Activated T-helper 2 cell treated with anti-CD3 and anti-CD28 coated beads, Interferon-gamma antibody, Interleukin-2, Interleukin-4, amounts not matched to agents 10 μg/mL and 5 μg/mL and 100 μg/mL, durations not matched to agents 14 hours and 24 hours and 36 hours (primary cell): ENCODE measurements at regions of chr3 and their contacts with region 1.

Region 1: GRCh38 chr3:33063651-33064051 is 33.3 kb downstream of the GLB1 start:
- DNase-seq: peak; percentile 60
- H3K4me3 Mint-ChIP-seq: peak overlapping the region; percentile 9
- H3K27ac Mint-ChIP-seq: peak overlapping the region; percentile 83
- H3K4me1 Mint-ChIP-seq: peaks cover 67% of the 10 kb centered on the region
- H3K27me3 Mint-ChIP-seq: no peaks in the 10 kb centered on the region

Region 2: DNA sequence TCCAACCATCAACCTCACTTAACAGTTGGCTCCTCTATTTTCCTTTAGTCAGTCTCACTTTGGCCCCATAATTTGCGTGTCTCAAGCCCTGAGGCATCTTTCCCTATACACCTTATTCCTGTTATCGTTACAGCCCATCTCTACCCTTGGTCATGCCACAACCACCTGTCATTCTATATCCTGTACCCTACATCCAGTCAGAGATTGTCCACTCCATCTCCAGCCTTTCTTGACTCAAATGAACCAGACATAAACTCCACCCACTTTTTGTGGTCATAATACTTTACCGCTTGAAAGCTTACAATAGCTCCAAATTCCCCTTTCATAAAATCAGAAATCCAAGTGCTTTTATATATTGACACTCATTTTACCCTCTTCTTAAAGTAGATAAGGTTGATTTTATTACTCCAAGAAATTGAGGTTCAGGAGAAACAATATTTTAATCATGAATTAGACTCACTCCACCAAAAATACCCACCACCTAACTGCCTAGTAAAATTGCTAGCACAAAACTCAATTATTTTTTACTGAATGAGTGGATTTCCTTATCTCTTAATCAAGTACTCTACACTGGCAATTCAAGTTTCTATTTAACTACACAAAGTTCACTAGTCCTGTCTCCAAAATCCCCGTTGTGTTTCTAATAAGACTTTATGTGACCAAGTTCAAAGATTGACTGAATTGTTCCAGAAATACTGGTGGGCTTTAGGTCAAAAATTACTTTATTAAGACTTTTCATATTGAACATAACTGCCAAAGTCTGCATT is 103.1 kb before region 1 on chr3:
- intact Hi-C with region 1: loop called (anchors 1 kb)
- DNase-seq: no peak
- H3K4me3 Mint-ChIP-seq: peak overlapping the region; percentile 73
- H3K27ac Mint-ChIP-seq: peak overlapping the region; percentile 99
- H3K4me1 Mint-ChIP-seq: peaks cover 62% of the 10 kb centered on the region
- H3K27me3 Mint-ChIP-seq: no peaks in the 10 kb centered on the region

Region 3: GRCh38 chr3:33006081-33006480 is 57.6 kb before region 1 on chr3:
- intact Hi-C with region 1: loop called (anchors 2 kb)
- DNase-seq: no peak
- H3K4me3 Mint-ChIP-seq: no peak overlapping the region
- H3K27ac Mint-ChIP-seq: peak overlapping the region; percentile 84
- H3K4me1 Mint-ChIP-seq: peaks cover 59% of the 10 kb centered on the region
- H3K27me3 Mint-ChIP-seq: no peaks in the 10 kb centered on the region

Region 4: DNA sequence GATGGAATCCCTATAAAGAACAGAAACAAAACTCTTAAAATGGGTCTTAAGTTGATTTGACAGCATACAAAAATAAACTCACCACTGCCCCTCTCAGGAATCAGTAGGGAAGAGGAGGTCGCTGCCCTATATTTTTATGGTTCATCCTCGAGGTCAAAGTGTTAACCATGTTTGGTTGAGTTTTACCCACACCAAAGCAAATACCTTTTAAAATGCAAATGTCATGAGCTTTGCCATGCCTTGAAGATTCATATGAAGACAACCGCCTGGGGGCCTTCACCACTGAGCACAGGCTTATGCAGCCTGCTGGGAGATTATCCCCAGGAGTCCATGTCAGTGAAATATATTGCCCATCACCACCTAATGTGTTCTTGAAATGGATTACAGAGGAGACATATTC is 32.8 kb before region 1 on chr3:
- intact Hi-C with region 1: loop called (anchors 2 kb)
- DNase-seq: peak; percentile 30
- H3K4me3 Mint-ChIP-seq: no peak overlapping the region
- H3K27ac Mint-ChIP-seq: peak overlapping the region; percentile 81
- H3K4me1 Mint-ChIP-seq: peaks cover 19% of the 10 kb centered on the region
- H3K27me3 Mint-ChIP-seq: no peaks in the 10 kb centered on the region

Region 5: GRCh38 chr3:33096093-33096868 is 32.6 kb after region 1 on chr3:
- intact Hi-C with region 1: loop called (anchors 2 kb)
- DNase-seq: peak; percentile 31
- H3K4me3 Mint-ChIP-seq: peak overlapping the region; percentile 98
- H3K27ac Mint-ChIP-seq: peak overlapping the region; percentile 84
- H3K4me1 Mint-ChIP-seq: peaks cover 33% of the 10 kb centered on the region
- H3K27me3 Mint-ChIP-seq: no peaks in the 10 kb centered on the region